ENCODE measurements at regions of chr6 and their contacts with region 1.

Region 1: GRCh38 chr6:88963139-88964090 is at the start of gene RNGTT:
- DNase-seq: peak; percentile 99
- H3K4me3 ChIP-seq: peak within 1 kb of the TSS; percentile 87 to 93 (median 90)
- H3K27ac ChIP-seq: peak within 1 kb of the TSS; percentile 87 to 89 (median 87)
- H3K4me1 ChIP-seq: peaks cover 0 to 26% (median 21%) of the 10 kb centered on the region in 4 donors
- H3K27me3 ChIP-seq: no peaks in the 10 kb centered on the region
- CTCF ChIP-seq: no peak
- EP300 ChIP-seq: peak in 1 of 4 donors; percentile 70
- POLR2A ChIP-seq: peak in 1 of 2 donors; percentile 40
- total RNA-seq, gene RNGTT: 10.0 to 14.7 (median 12.9) TPM

Region 2: DNA sequence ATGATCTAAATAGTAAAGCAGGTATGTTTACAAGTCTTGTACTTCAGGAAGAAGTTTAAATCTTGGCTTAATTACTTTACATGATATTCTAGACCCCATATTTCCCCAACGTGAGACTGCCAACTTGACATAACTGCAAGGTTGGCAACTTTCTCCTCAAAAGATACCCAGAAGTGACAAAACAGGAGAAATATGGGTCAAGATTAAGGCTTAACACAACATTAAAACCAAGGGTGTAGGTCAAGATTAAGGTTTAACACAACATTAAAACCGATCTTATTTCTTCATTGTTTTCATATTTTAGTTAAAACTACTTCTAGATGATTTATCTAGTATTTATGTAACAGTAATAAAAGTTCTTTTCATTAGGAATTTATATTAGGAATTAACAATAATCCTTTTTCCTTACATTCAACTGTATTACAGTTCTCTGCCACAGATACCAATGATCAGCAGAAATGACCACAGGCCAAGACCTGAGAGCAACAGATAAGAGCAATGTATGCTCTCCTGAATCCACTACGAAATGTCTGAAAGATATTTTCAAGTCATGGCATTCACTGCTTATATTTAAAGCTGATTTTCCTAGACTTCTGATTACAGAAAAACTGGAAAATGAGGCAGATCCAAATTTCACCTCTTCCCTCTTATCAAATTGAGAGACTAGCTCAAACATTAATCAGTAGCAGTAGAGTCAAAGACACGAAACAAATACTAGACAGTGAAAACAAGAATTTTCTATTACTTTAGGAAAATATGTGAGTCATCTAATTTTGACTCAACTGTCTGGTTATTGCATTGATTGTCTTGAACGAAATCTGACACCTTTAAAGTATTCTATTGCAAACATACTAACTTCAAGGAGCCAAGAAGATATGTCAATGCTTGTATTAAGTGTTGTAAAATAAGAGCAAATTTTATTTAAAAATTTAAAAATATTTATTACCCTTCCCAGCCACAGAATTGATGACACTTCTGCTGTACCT is 72.3 kb before region 1 on chr6:
- intact Hi-C with region 1: no loop called
- DNase-seq: no peak
- H3K4me3 ChIP-seq: no peak overlapping the region
- H3K27ac ChIP-seq: no peak overlapping the region
- H3K4me1 ChIP-seq: no peaks in the 10 kb centered on the region
- H3K27me3 ChIP-seq: no peaks in the 10 kb centered on the region
- CTCF ChIP-seq: no peak
- EP300 ChIP-seq: no peak
- POLR2A ChIP-seq: no peak

Region 3: DNA sequence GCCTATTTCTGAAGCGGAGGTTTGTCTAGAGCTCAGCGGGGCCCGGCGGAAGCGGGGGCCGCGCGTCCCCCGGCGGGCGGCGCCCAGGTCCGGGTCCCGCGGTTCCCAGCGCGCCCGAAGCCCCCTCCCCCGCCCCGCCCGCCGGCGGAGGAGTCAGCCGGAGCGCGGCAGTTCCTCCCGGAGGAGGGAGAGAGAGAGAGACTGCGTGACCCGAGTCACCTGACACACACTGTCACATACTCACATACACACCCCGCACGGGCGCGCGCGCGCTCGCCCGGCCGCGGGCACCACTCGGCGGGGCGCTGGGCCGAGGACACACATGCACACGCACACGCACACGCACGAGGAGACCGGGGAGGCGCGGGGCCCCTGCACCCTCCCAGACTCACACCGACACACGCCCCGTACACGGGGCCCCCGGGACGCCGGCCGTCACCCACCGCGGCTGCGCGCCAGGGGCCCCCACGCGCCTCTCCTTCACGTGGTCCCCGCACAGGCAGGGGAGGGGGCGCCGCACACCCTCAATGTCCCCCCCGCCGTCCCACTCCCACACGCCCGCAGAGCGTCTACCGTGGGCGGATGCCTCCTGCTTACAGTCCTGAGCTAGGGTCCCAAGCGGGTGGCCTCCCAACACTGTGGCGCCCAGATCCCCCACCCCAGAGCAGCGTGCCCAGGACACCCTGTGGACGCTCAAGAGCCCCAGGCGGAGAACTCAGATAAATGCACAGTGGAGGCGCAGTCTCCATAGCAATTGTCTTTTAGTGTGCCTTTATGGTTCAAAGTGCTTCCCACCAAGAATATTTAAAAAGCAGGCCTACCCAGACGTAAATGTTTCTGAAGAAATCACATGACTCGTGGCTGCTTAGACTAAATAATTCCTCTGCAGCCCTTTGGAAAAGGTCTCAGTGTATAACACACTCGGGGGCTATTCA is 448.9 kb after region 1 on chr6 and contains the start of gene RRAGD:
- intact Hi-C with region 1: loop called (anchors 5 kb)
- DNase-seq: peak; percentile 86
- H3K4me3 ChIP-seq: peak within 1 kb of the TSS; percentile 81 to 91 (median 84)
- H3K27ac ChIP-seq: peak within 1 kb of the TSS; percentile 64 to 77 (median 73)
- H3K4me1 ChIP-seq: peaks cover 0 to 23% (median 12%) of the 10 kb centered on the region in 4 donors
- H3K27me3 ChIP-seq: no peaks in the 10 kb centered on the region
- CTCF ChIP-seq: no peak
- EP300 ChIP-seq: peak in 1 of 4 donors; percentile 23
- POLR2A ChIP-seq: no peak
- total RNA-seq, gene RRAGD: 11.8 to 19.8 (median 13.3) TPM

Measured in sigmoid colon (tissue), 7 donors.